A673 (cell line): ENCODE measurements at regions of chr15 and their contacts with region 1.

Region 1: GRCh38 chr15:25053000-25053815 is 98.4 kb downstream of the SNRPN start:
- DNase-seq: no peak
- H3K4me3 ChIP-seq: no peak overlapping the region
- H3K27ac ChIP-seq: no peak overlapping the region
- H3K4me1 ChIP-seq: no peaks in the 10 kb centered on the region
- H3K27me3 ChIP-seq: no peaks in the 10 kb centered on the region
- CTCF ChIP-seq: no peak

Region 2: GRCh38 chr15:24956111-24956838 is 96.9 kb before region 1 on chr15:
- CTCF ChIA-PET with region 1: no interaction called
- POLR2A ChIA-PET with region 1: no interaction called
- intact Hi-C with region 1: loop called (anchors 10 kb)
- DNase-seq: peak; percentile 78
- H3K4me3 ChIP-seq: peak overlapping the region; percentile 82
- H3K27ac ChIP-seq: peak overlapping the region; percentile 74
- H3K4me1 ChIP-seq: no peaks in the 10 kb centered on the region
- H3K27me3 ChIP-seq: no peaks in the 10 kb centered on the region
- CTCF ChIP-seq: no peak